Activated B cell treated with CpG ODN at 0.5 μM for 24 hours (primary cell): ENCODE measurements at regions of chr11 and their contacts with region 1.

Region 1: GRCh38 chr11:10792398-10792975 is 16.2 kb downstream of the EIF4G2 start:
- DNase-seq: peak; percentile 83
- ATAC-seq: peak; percentile 91
- H3K4me3 Mint-ChIP-seq: peak overlapping the region; percentile 13
- H3K27ac Mint-ChIP-seq: no peak overlapping the region
- H3K4me1 Mint-ChIP-seq: peaks cover 16% of the 10 kb centered on the region
- H3K27me3 Mint-ChIP-seq: no peaks in the 10 kb centered on the region
- CTCF ChIP-seq: peak; percentile 72

Region 2: GRCh38 chr11:10502770-10503169 is 289.7 kb before region 1 on chr11:
- CTCF ChIA-PET with region 1: no interaction called
- POLR2A ChIA-PET with region 1: no interaction called
- intact Hi-C with region 1: no loop called
- DNase-seq: no peak
- ATAC-seq: peak; percentile 40
- H3K4me3 Mint-ChIP-seq: peak overlapping the region; percentile 12
- H3K27ac Mint-ChIP-seq: peak overlapping the region; percentile 77
- H3K4me1 Mint-ChIP-seq: peaks cover 26% of the 10 kb centered on the region
- H3K27me3 Mint-ChIP-seq: no peaks in the 10 kb centered on the region
- CTCF ChIP-seq: no peak

Region 3: GRCh38 chr11:10770626-10771254 is 21.7 kb before region 1 on chr11:
- CTCF ChIA-PET with region 1: interaction called, 15 read pairs
- POLR2A ChIA-PET with region 1: interaction called, 8 read pairs
- intact Hi-C with region 1: no loop called
- DNase-seq: no peak
- ATAC-seq: peak; percentile 28
- H3K4me3 Mint-ChIP-seq: no peak overlapping the region
- H3K27ac Mint-ChIP-seq: no peak overlapping the region
- H3K4me1 Mint-ChIP-seq: peaks cover 3% of the 10 kb centered on the region
- H3K27me3 Mint-ChIP-seq: no peaks in the 10 kb centered on the region
- CTCF ChIP-seq: no peak

Region 4: DNA sequence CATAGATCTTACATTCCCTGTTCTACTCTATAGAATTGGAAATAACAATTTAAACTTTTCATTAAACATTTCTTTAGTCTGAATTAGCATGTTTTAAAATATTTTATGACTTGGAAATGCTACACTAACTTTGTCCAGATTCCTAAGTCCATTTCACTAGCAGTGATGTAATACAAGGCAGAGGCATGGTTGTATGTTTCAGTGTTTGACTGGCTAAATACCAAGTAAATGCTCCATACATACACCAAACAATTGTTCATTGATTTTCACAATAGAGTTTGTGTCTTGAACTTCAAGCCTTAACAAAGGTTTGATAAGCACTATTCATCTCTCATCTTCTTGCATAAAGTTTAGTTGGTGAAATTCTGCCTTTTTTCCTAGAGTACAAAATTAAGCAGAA is 51.9 kb after region 1 on chr11:
- CTCF ChIA-PET with region 1: interaction called, 10 read pairs
- POLR2A ChIA-PET with region 1: interaction called, 3 read pairs
- intact Hi-C with region 1: no loop called
- DNase-seq: no peak
- ATAC-seq: no peak
- H3K4me3 Mint-ChIP-seq: no peak overlapping the region
- H3K27ac Mint-ChIP-seq: no peak overlapping the region
- H3K4me1 Mint-ChIP-seq: peaks cover 13% of the 10 kb centered on the region
- H3K27me3 Mint-ChIP-seq: no peaks in the 10 kb centered on the region
- CTCF ChIP-seq: no peak

Region 5: DNA sequence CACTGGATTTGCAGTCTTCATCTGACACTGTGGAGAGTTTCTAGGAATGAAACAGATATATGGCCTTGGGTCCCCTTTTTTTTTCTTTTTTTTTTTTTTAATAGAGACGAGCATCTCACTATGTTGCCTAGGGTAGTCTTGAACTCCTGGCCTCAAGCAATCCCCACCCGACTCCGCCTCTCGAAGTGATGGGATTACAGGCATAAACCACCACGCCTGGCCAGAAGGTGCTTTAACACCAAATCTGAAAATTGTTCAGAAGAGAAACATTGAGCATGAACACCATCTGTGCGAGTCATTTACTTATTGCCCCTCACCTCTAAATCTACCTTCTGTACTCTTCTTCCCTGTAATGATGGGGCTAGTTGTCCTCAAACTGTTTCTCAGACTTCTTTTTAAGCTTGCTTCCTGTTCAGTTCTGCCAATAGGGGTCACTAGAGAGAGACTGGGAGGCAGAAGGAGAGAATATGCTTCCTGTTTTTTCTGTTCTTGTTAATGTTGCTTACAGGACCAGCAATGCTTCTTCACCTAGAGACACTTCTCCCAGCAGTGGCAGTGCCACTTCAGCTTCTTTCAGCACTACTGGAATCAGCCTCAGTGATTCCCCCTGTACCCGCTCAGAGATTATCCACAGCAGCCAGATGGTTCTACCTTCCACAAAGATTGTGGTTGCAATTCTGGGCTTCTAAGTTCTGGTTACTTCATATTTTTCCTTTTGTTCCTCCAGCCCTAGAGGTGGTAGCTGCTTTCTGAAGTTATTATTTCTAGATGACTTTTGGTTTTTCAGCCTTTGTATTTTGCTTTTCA is 86.1 kb after region 1 on chr11:
- CTCF ChIA-PET with region 1: interaction called, 3 read pairs
- POLR2A ChIA-PET with region 1: no interaction called
- intact Hi-C with region 1: loop called (anchors 5 kb)
- DNase-seq: no peak
- ATAC-seq: peak; percentile 84
- H3K4me3 Mint-ChIP-seq: no peak overlapping the region
- H3K27ac Mint-ChIP-seq: no peak overlapping the region
- H3K4me1 Mint-ChIP-seq: peaks cover 13% of the 10 kb centered on the region
- H3K27me3 Mint-ChIP-seq: no peaks in the 10 kb centered on the region
- CTCF ChIP-seq: no peak

Region 6: DNA sequence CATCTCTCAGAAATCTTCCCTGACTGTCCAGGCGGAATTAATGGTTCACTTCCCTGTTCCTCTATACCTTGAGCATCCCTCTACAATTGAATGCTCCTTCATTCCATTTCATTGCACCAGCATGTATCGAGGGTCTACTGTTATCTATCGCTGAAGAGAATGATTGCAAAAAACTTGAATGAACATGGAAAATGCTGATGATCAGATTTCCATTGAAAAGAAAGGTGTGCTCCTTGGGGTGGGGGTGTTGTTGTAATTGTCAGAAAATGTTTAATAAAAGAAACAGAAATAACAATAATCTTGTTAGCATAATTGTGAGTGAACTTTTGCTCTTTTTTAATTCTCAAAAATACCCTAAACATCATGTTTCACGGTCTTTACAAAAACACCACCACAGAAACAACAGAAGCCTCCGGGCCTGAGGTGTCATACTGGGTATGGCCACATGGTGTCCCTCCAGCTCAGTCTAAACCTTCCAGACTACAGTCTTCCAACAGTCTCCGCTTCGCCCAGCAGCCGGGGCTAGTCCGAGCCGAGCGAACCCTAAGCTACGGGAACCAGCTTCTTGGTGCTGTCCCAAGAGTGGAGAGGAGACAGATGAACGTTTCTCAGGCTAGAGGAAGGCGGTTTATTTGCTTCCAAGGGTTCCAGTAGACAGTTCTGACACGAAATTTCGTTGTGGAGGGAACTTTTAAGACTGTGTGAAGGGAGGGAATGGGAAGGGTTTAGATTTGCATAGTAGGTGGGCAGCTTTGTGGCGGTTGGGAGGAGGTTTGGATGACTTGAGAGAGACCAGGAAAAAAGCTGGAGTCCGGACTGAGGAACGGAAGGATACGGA is 141.2 kb after region 1 on chr11:
- CTCF ChIA-PET with region 1: interaction called, 18 read pairs
- POLR2A ChIA-PET with region 1: interaction called, 4 read pairs
- intact Hi-C with region 1: loop called (anchors 1 kb)
- DNase-seq: peak; percentile 74
- ATAC-seq: peak; percentile 96
- H3K4me3 Mint-ChIP-seq: peak overlapping the region; percentile 82
- H3K27ac Mint-ChIP-seq: peak overlapping the region; percentile 18
- H3K4me1 Mint-ChIP-seq: peaks cover 22% of the 10 kb centered on the region
- H3K27me3 Mint-ChIP-seq: peaks cover 28% of the 10 kb centered on the region
- CTCF ChIP-seq: peak; percentile 72

Region 7: GRCh38 chr11:11028017-11028692 is 235.7 kb after region 1 on chr11:
- CTCF ChIA-PET with region 1: interaction called, 20 read pairs
- POLR2A ChIA-PET with region 1: no interaction called
- intact Hi-C with region 1: no loop called
- DNase-seq: peak; percentile 55
- ATAC-seq: peak; percentile 73
- H3K4me3 Mint-ChIP-seq: no peak overlapping the region
- H3K27ac Mint-ChIP-seq: no peak overlapping the region
- H3K4me1 Mint-ChIP-seq: no peaks in the 10 kb centered on the region
- H3K27me3 Mint-ChIP-seq: peaks cover 7% of the 10 kb centered on the region
- CTCF ChIP-seq: no peak

Region 8: GRCh38 chr11:11787305-11788062 is 995.0 kb after region 1 on chr11:
- CTCF ChIA-PET with region 1: interaction called, 25 read pairs
- POLR2A ChIA-PET with region 1: interaction called, 3 read pairs
- intact Hi-C with region 1: loop called (anchors 1 kb)
- DNase-seq: peak; percentile 33
- ATAC-seq: peak; percentile 85
- H3K4me3 Mint-ChIP-seq: no peak overlapping the region
- H3K27ac Mint-ChIP-seq: no peak overlapping the region
- H3K4me1 Mint-ChIP-seq: no peaks in the 10 kb centered on the region
- H3K27me3 Mint-ChIP-seq: peaks cover 9% of the 10 kb centered on the region
- CTCF ChIP-seq: peak; percentile 81